Calu3 (cell line): ENCODE measurements at regions of chrX and their contacts with region 1.

Region 1: DNA sequence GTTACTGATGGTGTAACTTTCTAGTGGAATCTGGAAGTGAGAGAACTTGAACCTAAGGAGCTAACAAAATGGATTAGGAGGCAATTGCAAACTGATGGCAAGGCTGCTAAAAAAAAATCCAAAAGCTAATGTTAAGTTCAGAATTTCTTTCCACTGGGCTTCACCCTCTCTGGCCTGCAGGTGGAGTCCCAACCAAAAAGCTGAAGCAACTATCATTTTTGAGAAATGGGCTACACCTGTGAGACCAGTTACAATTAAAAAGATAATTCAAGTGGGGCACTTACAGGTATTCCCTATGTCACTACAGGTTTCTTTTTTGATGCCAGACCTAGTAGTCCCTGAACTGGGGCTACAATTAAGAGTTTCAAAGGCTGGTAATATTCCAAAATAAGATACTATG is 142.1 kb upstream of the FTHL17 start:
- DNase-seq: peak; percentile 36
- H3K4me3 Mint-ChIP-seq: no peak overlapping the region
- H3K27ac Mint-ChIP-seq: no peak overlapping the region
- H3K4me1 Mint-ChIP-seq: no peaks in the 10 kb centered on the region
- H3K27me3 Mint-ChIP-seq: no peaks in the 10 kb centered on the region
- CTCF ChIP-seq: no peak

Region 2: DNA sequence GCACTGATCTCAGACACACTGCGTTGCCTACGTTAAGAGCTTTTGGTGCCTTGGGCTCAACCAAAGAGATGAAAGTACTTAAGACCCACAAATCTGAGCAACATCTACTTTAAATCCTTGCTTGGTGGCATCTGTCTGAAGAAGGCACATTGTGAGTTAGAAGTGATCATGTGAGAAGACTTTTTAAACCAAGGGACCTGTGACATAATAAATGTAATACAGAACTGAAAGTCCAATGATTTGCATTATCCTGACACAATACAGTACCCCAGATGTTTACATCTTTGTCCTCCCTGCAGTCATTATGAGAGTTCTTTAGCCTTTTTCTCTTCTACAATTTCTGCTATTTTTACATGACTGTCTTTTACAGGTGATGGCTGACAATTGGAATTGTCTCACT is 45.4 kb before region 1 on chrX:
- CTCF ChIA-PET with region 1: no interaction called
- intact Hi-C with region 1: no loop called
- DNase-seq: no peak
- H3K4me3 Mint-ChIP-seq: no peak overlapping the region
- H3K27ac Mint-ChIP-seq: no peak overlapping the region
- H3K4me1 Mint-ChIP-seq: peaks cover 17% of the 10 kb centered on the region
- H3K27me3 Mint-ChIP-seq: no peaks in the 10 kb centered on the region
- CTCF ChIP-seq: no peak

Region 3: DNA sequence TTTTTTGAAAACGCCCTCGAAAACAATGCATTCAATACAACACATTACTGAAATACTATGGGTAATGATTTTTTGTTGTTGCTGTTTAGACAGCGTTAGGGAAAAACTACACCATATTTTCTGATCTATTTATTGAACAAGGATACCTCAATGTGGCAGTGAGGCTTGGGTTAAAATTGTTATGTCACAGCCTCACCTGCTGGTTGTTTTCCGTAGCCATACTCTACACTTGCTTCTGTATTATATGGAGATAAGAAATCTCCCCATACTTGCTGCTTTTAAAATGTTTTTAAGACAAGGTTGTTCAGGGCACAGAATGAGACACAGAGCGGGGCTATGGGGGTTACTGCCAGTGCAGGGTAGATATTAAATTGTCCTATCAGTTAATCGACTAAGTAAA is 79.5 kb after region 1 on chrX:
- CTCF ChIA-PET with region 1: no interaction called
- intact Hi-C with region 1: loop called (anchors 1 kb)
- DNase-seq: peak; percentile 4
- H3K4me3 Mint-ChIP-seq: no peak overlapping the region
- H3K27ac Mint-ChIP-seq: no peak overlapping the region
- H3K4me1 Mint-ChIP-seq: no peaks in the 10 kb centered on the region
- H3K27me3 Mint-ChIP-seq: no peaks in the 10 kb centered on the region
- CTCF ChIP-seq: no peak

Region 4: DNA sequence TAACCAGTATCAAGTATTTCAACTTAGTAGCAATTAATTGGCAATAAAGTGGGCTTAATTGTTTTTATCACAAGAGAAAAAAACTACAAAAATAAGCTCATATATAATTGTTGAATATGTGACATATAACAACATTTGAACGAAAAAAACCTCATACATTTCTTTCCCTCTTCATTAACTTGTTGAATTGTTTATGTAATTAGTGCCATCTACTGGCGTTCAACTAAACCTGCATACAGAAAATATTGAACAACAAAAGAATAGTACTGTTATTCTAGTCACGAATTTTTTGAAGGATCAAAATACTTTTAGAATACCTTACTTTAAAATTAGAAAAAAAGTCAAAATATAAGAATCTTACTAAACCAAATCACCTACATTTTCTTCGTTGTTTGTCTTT is 444.4 kb after region 1 on chrX:
- CTCF ChIA-PET with region 1: interaction called, 3 read pairs
- intact Hi-C with region 1: loop called (anchors 2 kb)
- DNase-seq: no peak
- H3K4me3 Mint-ChIP-seq: no peak overlapping the region
- H3K27ac Mint-ChIP-seq: no peak overlapping the region
- H3K4me1 Mint-ChIP-seq: peaks cover 7% of the 10 kb centered on the region
- H3K27me3 Mint-ChIP-seq: no peaks in the 10 kb centered on the region
- CTCF ChIP-seq: peak; percentile 17